ENCODE measurements at regions of chr12 and their contacts with region 1.

Region 1: GRCh38 chr12:108950991-108951739 is 69.7 kb downstream of the SVOP start:
- DNase-seq: peak; percentile 82
- ATAC-seq: peak; percentile 71

Region 2: DNA sequence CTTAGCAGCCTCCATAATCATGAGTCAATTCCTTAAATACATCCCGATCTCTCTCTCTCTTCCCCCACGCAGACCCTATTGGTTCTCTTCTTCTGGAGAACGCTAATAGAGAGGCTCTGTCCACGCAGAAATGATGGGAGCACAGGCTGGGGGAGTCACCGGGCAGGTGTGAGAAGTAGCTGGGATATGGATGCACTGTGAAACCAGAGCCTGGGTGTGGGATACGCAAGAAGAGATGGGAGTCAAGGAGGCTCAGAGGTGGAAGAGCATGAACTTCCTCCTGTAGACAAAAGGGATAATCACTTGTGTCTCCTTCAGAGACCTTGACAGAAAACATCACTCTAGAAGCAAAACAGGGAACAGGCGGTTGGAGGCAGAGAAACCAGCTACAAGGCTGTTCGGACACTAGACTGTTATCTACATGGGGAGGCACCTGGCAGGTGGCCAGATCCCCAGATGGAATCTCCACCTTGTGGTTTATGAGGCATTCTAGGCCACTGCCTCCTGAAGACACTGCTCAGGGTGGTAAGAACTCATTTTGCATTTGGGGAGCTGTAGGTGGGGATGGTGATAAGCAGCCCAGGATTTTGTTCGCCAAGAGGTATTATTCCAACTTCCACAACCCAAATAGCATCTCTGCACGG is 310.2 kb before region 1 on chr12:
- intact Hi-C with region 1: loop called (anchors 10 kb)
- DNase-seq: no peak
- ATAC-seq: peak; percentile 5

Region 3: GRCh38 chr12:108803428-108804105 is 147.6 kb before region 1 on chr12:
- intact Hi-C with region 1: loop called (anchors 10 kb)
- DNase-seq: peak; percentile 60
- ATAC-seq: peak; percentile 84

Region 4: DNA sequence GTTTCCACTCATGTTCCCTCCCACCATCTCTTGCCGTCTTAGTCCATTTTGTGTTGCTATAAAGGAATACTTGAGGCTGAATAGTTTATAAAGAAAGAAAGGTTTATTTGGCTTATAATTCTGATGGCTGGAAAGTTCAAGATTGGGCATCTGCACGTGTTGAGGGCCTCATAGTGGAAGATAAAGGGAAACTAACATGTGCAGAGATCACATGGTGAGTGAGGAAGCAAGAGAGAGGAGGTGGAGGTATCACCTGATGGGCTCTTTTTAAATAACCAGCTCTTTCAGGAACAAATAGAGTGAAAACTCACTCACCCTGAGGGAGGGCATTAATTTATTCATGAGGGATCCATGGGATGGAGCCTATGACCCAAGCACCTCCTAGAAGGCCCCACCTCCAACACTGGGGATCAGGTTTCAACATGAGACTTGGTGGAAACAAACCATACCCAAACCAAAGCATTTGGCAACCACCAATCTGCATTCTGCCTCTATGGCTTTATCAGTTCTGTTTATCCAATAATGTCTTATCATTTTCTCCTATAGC is 426.0 kb after region 1 on chr12:
- intact Hi-C with region 1: no loop called
- DNase-seq: no peak
- ATAC-seq: no peak